T-cell (primary cell): ENCODE measurements at regions of chr5 and their contacts with region 1.

Region 1: DNA sequence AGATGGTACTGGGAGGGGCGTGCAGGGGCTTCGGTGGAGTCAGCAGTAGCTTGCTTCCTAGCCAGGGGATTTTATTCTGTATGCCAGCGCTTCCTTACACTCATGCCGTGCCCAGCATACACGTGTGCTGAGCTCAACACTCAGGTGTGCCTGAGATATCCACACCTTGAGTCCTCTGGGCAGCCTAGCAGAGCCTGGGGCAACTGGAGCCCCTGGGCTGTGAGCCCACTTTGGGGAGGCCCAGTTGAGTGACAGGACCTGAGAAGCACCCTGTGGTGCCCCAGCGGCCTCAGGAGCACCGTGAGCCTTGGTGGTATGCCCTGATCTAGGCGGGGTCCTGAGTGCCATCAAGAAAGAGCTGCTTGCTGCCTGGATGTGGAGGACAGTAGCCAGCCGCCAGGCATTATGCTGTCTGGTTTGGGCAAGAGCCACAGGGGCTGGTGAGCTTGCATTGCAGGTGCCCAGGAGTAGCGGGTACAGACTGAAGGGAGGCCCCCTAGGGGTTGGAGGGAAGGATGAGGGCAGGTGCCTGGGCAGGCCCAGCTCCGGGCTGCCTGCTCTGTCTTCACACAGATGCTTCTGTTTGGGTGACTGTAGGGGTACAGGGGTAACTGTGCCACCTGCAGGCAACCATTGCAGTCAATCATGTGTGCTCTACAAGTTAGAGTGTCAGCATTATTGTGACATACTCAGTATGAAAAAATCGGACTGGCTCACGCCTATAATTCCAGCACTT is 42.9 kb downstream of the BNIP1 start:
- DNase-seq: peak in 3 of 35 experiments; percentile 3 to 14 (median 11)
- ATAC-seq: peak in 1 of 4 experiments; percentile 51
- H3K4me3 ChIP-seq: no peak overlapping the region
- H3K4me3 Mint-ChIP-seq: no peak overlapping the region
- H3K27ac ChIP-seq: no peak overlapping the region
- H3K27ac Mint-ChIP-seq: no peak overlapping the region
- H3K4me1 ChIP-seq: no peaks in the 10 kb centered on the region
- H3K4me1 Mint-ChIP-seq: no peaks in the 10 kb centered on the region
- H3K27me3 ChIP-seq: peaks cover 0 to 4% of the 10 kb centered on the region in 2 experiments
- H3K27me3 Mint-ChIP-seq: peaks cover 2 to 4% of the 10 kb centered on the region in 2 donors

Region 2: DNA sequence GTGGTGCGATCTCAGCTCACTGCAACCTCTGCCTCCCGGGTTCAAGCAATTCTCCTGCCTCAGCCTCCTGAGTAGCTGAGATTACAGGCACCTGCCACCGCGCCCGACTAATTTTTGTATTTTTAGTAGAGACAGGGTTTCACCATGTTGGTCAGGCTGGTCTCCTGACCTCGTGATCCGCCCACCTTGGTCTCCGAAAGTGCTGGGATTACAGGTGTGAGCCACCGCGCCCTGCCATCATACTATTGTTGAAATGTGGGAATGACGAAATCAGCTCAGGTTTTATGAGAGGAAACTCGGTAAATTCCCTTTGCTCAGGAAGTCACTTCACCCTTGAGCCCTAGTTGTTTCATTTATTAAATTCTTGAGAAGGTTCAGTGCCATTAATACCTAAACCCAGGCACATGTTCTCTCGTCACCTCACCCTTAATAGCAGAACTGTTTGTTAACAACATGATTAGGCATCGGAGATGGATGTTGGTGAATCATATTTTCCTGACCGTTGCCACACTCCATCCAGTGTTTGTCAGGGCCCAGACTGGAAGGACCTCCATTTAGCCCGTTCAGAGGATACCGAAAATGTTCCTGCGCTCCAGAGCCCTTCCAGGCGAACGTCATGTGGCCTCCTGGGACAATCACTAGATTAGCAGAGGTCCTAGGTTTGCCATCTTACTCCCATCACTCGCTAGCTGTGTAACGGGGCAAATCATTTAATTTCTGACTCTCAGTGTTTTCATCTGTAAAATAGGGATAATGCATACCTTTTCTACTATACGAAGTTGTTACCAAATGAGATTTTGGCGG is 151.1 kb before region 1 on chr5:
- CTCF ChIA-PET with region 1: interaction called in 1 of 2 experiments, 12 read pairs
- POLR2A ChIA-PET with region 1: no interaction called
- DNase-seq: peak in 1 of 35 experiments; percentile 32
- ATAC-seq: peak in 1 of 4 experiments; percentile 29
- H3K4me3 ChIP-seq: peak overlapping the region in 1 of 2 donors; percentile 34
- H3K4me3 Mint-ChIP-seq: peak overlapping the region; percentile 63 to 77 (median 76)
- H3K27ac ChIP-seq: peak overlapping the region; percentile 84
- H3K27ac Mint-ChIP-seq: peak overlapping the region; percentile 96 to 99
- H3K4me1 ChIP-seq: peaks cover 15 to 37% of the 10 kb centered on the region in 2 experiments
- H3K4me1 Mint-ChIP-seq: peaks cover 60 to 70% (median 61%) of the 10 kb centered on the region in 3 donors
- H3K27me3 ChIP-seq: no peaks in the 10 kb centered on the region
- H3K27me3 Mint-ChIP-seq: no peaks in the 10 kb centered on the region